Mucosa of descending colon (tissue), 3 donors: ENCODE measurements at regions of chr5 and their contacts with region 1.

Region 1: DNA sequence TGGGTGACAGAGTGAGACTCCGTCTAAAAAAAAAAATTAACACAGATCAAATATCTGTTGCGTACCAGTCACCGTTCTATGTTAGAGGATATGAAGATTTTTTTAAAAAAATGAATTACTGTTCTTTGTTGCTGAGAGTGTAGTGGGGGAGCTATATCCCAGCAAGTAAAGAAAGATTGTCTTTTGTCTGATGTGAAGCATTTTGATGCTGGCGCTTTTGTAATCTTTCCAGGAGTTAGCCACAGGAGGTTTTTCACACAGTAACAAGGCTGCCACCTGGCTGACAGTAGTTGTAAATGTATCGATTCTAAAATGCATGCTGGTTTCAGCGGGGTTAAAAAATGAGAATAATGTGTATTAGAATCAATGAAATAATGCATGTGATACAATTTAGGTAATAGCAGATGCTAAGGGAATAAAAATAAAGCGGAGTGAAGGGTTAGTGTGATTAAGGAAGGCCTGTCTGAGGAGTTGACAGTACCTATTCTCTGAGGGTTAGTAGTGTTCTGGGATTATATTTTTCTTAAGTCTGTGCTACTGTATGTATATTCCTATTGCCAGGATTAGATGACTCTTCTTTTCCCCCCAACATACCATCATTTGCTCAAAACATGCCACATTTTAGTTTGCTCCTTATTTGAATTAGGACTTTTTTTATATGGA is 3.4 kb downstream of the LMNB1 start:
- DNase-seq: peak in 1 of 3 donors; percentile 65
- ATAC-seq: no peak
- H3K4me3 ChIP-seq: no peak overlapping the region
- H3K4me1 ChIP-seq: peaks cover 18% of the 10 kb centered on the region
- CTCF ChIP-seq: peak; percentile 31

Region 2: DNA sequence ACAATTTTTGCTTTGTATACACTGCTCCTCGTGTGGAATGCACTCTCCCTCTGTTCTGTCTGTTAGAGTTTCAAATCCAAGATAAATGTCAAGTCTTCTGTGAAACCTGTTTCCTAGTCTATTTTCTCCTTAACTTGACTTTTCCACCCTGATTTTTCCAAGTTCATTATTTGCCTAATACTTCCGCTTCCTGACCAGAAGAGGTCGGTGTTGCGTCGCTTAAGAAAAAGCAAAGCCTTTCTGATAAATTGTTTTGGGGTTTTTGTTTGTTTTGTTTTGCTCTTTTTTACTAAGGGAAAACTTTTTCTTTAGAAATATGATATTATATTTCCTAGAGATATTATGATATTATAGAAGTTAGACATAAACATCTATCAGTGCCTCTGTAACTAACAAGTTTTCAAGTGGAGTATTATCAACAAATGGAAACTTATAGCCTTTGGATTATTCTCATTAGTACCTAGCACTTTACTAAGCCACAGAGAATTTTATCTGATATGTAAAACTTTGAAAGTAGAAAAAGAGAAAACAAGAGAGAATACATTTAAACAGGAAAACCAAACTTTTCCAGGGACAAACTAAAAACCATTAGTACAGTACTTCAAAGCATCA is 123.8 kb before region 1 on chr5:
- intact Hi-C with region 1: loop called in 1 of 2 experiments (anchors 5 kb)
- DNase-seq: no peak
- ATAC-seq: peak; percentile 31
- H3K4me3 ChIP-seq: no peak overlapping the region
- H3K4me1 ChIP-seq: peaks cover 7% of the 10 kb centered on the region
- CTCF ChIP-seq: peak; percentile 43

Region 3: DNA sequence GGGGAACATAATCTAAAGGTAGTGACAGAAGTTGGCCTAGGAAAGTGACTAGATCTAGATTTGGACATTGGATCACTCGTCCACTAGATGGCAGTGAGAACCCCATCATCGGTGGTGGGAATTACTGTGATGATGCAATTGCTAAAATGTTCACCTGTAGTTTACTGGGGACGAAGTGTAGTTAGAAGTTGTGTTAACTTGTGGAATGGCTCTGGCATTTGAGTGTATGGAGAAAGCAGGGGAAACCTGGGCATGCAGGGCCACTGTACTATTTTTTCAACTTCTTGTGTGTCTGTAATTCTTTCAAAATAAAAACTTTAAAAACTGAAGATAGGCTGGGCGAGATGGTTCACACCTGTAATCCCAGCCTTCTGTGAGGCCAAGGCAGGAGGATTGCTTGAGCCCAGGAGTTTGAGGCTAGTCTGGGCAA is 104.1 kb before region 1 on chr5:
- intact Hi-C with region 1: loop called in 1 of 2 experiments (anchors 5 kb)
- DNase-seq: peak in 1 of 3 donors; percentile 77
- ATAC-seq: peak; percentile 73
- H3K4me3 ChIP-seq: no peak overlapping the region
- H3K4me1 ChIP-seq: peaks cover 18% of the 10 kb centered on the region
- CTCF ChIP-seq: peak; percentile 60